Activated CD4-positive, alpha-beta T cell treated with anti-CD3 and anti-CD28 coated beads for 36 hours (primary cell): ENCODE measurements at regions of chr9 and their contacts with region 1.

Region 1: GRCh38 chr9:69759421-69760277 is at the start of gene PTAR1:
- DNase-seq: peak; percentile 95
- ATAC-seq: peak; percentile 87
- H3K4me3 Mint-ChIP-seq: peak within 1 kb of the TSS; percentile 94
- H3K27ac Mint-ChIP-seq: peak within 1 kb of the TSS; percentile 94
- H3K4me1 Mint-ChIP-seq: peaks cover 27% of the 10 kb centered on the region
- H3K27me3 Mint-ChIP-seq: no peaks in the 10 kb centered on the region
- total RNA-seq, gene PTAR1: 35.2 to 37.1 TPM

Region 2: GRCh38 chr9:69672596-69673310 is 86.9 kb before region 1 on chr9:
- CTCF ChIA-PET with region 1: interaction called, 9 read pairs
- POLR2A ChIA-PET with region 1: no interaction called
- intact Hi-C with region 1: loop called (anchors 1 kb)
- DNase-seq: peak; percentile 87
- ATAC-seq: peak; percentile 91
- H3K4me3 Mint-ChIP-seq: peak overlapping the region; percentile 67
- H3K27ac Mint-ChIP-seq: no peak overlapping the region
- H3K4me1 Mint-ChIP-seq: no peaks in the 10 kb centered on the region
- H3K27me3 Mint-ChIP-seq: peaks cover 19% of the 10 kb centered on the region

Region 3: DNA sequence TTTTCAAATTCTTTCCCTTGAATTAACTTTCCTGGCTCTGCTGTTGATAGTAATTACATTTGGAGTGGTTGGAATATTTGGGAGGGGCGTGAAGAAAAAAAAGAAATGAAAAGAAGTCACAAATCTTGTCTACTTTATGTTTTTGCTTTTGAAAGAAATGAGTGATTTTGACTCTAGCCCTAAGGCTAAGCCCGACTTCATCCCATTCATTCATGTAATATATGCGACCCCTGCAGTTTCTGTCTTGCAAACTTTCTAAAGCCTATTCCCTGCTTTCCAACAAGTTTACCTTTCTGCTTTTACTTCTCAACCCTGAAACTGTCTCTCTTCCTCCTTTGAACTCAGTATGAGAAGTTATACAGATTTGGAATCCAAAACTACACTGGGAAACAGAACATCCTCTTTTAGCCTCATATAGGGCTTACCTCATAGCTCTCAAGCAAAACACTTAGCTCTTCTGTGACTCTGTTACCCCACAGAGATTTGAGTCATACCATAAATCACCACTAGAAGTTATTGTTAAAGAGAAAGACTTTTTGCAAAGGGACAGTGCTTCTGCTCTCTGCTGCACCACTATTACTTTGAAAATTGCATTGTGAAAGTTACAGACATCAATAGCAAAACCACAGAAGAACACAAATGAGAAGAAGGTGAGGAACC is 62.6 kb after region 1 on chr9:
- CTCF ChIA-PET with region 1: no interaction called
- POLR2A ChIA-PET with region 1: no interaction called
- intact Hi-C with region 1: loop called in 1 of 2 experiments (anchors 1 kb)
- DNase-seq: no peak
- ATAC-seq: peak; percentile 82
- H3K4me3 Mint-ChIP-seq: no peak overlapping the region
- H3K27ac Mint-ChIP-seq: no peak overlapping the region
- H3K4me1 Mint-ChIP-seq: peaks cover 26% of the 10 kb centered on the region
- H3K27me3 Mint-ChIP-seq: peaks cover 26% of the 10 kb centered on the region